ENCODE measurements at regions of chr9 and their contacts with region 1.

Region 1: DNA sequence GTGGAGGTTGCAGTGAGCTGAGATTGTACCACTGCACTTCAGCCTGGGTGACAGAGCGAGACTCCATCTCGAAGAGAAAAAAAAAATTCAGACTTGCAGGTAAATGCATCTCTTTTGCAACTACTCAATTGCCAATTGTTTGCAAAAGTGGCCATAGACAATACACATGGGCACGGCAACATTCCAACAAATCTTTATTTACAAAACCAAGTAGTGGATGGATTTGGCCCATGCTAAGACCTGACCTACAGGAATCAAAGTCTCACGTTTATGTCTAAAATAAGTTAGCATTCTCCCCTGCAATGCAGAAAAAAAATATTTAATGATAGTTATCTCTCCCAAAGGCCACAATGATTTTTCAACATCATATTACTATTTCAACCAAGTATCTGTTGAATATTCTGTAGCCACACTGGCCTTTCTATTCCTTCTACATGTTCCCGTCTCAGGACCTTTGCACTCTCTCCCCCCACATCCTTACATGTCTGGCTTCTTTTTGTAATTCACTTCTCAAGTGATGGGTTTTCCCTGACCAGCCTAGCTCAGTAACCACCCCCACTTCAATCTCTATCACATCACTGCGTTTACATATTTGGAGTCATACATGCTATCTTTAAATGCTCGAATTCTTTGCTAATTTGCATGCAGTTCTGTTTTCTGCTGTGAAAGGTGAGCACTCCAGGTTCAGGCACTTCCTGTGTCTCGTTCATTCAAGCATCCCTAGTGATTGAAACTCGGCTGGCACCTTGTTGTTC is 54.2 kb downstream of the FNBP1 start:
- DNase-seq: peak; percentile 92
- ATAC-seq: peak; percentile 74
- H3K4me3 ChIP-seq: peak overlapping the region in 1 of 5 experiments; percentile 45
- H3K4me3 Mint-ChIP-seq: peak overlapping the region; percentile 76
- H3K27ac ChIP-seq: peak overlapping the region; percentile 92
- H3K27ac Mint-ChIP-seq: peak overlapping the region; percentile 93
- H3K4me1 ChIP-seq: peaks cover 77 to 90% of the 10 kb centered on the region in 2 donors
- H3K4me1 Mint-ChIP-seq: peaks cover 71% of the 10 kb centered on the region
- H3K27me3 ChIP-seq: no peaks in the 10 kb centered on the region
- H3K27me3 Mint-ChIP-seq: no peaks in the 10 kb centered on the region
- CTCF ChIP-seq: no peak

Region 2: DNA sequence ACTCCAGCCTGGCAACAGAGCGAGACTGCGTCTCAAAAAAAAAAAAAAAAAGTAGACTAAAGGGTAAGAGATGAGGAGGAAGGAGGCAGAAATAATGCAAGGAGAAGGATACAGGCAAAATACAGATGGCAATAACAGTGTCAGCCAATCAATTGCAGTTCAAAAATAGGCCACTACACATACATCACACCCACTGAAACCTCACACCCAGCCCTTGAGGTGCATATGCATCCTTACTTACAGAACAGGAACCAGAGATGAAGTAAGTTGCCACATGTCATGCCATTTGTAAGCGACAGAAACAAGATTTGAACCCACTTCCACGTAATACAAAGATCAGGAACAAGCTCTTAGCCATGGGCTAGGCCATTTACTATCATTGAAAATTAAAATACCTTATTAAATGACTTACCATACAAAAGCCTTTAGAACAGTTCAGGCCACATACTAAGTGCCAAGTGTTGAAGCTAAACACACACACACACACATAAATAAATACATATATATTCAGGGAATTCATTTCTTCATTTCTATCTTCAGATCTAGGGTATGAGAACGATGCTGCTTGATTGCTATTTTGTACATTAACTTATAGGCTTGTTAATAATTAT is 44.2 kb before region 1 on chr9:
- CTCF ChIA-PET with region 1: no interaction called
- POLR2A ChIA-PET with region 1: interaction called, 4 read pairs
- intact Hi-C with region 1: loop called (anchors 5 kb)
- DNase-seq: peak; percentile 65
- ATAC-seq: peak; percentile 43
- H3K4me3 ChIP-seq: peak overlapping the region in 1 of 5 experiments; percentile 11
- H3K4me3 Mint-ChIP-seq: peak overlapping the region; percentile 33
- H3K27ac ChIP-seq: peak overlapping the region; percentile 25 to 84
- H3K27ac Mint-ChIP-seq: peak overlapping the region; percentile 63
- H3K4me1 ChIP-seq: peaks cover 23 to 30% of the 10 kb centered on the region in 2 donors
- H3K4me1 Mint-ChIP-seq: peaks cover 25% of the 10 kb centered on the region
- H3K27me3 ChIP-seq: no peaks in the 10 kb centered on the region
- H3K27me3 Mint-ChIP-seq: no peaks in the 10 kb centered on the region
- CTCF ChIP-seq: peak; percentile 37

Region 3: GRCh38 chr9:129962889-129963703 is 25.7 kb before region 1 on chr9:
- CTCF ChIA-PET with region 1: interaction called, 4 read pairs
- POLR2A ChIA-PET with region 1: no interaction called
- intact Hi-C with region 1: loop called (anchors 2 kb)
- DNase-seq: peak; percentile 88
- ATAC-seq: peak; percentile 96
- H3K4me3 ChIP-seq: peak overlapping the region; percentile 43 to 81 (median 58)
- H3K4me3 Mint-ChIP-seq: peak overlapping the region; percentile 83
- H3K27ac ChIP-seq: peak overlapping the region; percentile 93 to 96
- H3K27ac Mint-ChIP-seq: peak overlapping the region; percentile 93
- H3K4me1 ChIP-seq: peaks cover 30 to 35% of the 10 kb centered on the region in 2 donors
- H3K4me1 Mint-ChIP-seq: peaks cover 61% of the 10 kb centered on the region
- H3K27me3 ChIP-seq: no peaks in the 10 kb centered on the region
- H3K27me3 Mint-ChIP-seq: no peaks in the 10 kb centered on the region
- CTCF ChIP-seq: no peak

Region 4: DNA sequence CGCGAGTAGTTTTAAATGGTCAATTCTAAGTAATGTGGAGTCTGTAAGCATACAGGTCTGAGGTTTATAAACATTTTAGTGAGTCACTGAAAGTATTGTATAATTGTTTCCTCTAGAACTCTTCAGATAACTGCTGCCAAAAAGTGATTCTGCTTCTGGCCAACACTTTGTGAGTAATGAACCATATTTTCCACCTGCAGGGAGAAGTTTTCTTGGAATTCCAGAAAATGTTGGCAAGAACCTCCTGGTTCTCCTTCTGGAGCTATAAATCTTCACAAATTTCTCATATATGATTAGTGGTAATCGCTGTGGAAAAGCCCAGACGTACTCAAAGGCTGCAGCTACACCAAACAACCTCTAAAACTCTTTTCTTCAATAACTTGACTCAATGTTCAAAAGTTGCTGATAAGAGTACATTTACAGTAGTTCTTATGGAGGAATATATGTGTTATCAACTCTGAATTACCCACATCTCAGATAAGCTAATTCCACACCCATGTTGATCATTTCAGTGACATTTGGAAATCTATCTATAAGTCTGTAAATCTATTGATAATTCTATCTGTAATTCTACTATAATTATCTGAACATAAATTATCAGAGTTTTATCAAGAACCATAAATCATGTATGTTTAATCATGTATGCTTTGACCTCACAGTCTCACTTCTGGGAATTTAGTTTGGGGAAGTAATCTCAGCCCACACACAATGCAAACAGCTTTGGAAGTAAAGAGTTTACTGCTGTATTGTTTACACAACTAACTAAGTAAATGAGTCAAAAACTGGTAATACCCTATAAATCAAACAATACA is 19.9 kb before region 1 on chr9:
- CTCF ChIA-PET with region 1: interaction called, 4 read pairs
- POLR2A ChIA-PET with region 1: interaction called, 11 read pairs
- intact Hi-C with region 1: no loop called
- DNase-seq: no peak
- ATAC-seq: no peak
- H3K4me3 ChIP-seq: no peak overlapping the region
- H3K4me3 Mint-ChIP-seq: no peak overlapping the region
- H3K27ac ChIP-seq: peak overlapping the region in 1 of 2 donors; percentile 25
- H3K27ac Mint-ChIP-seq: peak overlapping the region; percentile 10
- H3K4me1 ChIP-seq: peaks cover 8 to 14% of the 10 kb centered on the region in 2 donors
- H3K4me1 Mint-ChIP-seq: peaks cover 38% of the 10 kb centered on the region
- H3K27me3 ChIP-seq: no peaks in the 10 kb centered on the region
- H3K27me3 Mint-ChIP-seq: no peaks in the 10 kb centered on the region
- CTCF ChIP-seq: no peak

Region 5: GRCh38 chr9:130002320-130003046 is 13.7 kb after region 1 on chr9:
- CTCF ChIA-PET with region 1: interaction called, 12 read pairs
- POLR2A ChIA-PET with region 1: interaction called, 6 read pairs
- intact Hi-C with region 1: loop called (anchors 1 kb)
- DNase-seq: no peak
- ATAC-seq: no peak
- H3K4me3 ChIP-seq: peak overlapping the region in 1 of 5 experiments; percentile 11
- H3K4me3 Mint-ChIP-seq: peak overlapping the region; percentile 50
- H3K27ac ChIP-seq: peak overlapping the region; percentile 15 to 96
- H3K27ac Mint-ChIP-seq: peak overlapping the region; percentile 89
- H3K4me1 ChIP-seq: peaks cover 53 to 56% of the 10 kb centered on the region in 2 donors
- H3K4me1 Mint-ChIP-seq: peaks cover 63% of the 10 kb centered on the region
- H3K27me3 ChIP-seq: no peaks in the 10 kb centered on the region
- H3K27me3 Mint-ChIP-seq: no peaks in the 10 kb centered on the region
- CTCF ChIP-seq: no peak

Region 6: GRCh38 chr9:130010151-130010988 is 21.6 kb after region 1 on chr9:
- CTCF ChIA-PET with region 1: interaction called, 4 read pairs
- POLR2A ChIA-PET with region 1: interaction called, 12 read pairs
- intact Hi-C with region 1: loop called (anchors 1 kb)
- DNase-seq: peak; percentile 91
- ATAC-seq: peak; percentile 65
- H3K4me3 ChIP-seq: no peak overlapping the region
- H3K4me3 Mint-ChIP-seq: peak overlapping the region; percentile 61
- H3K27ac ChIP-seq: peak overlapping the region; percentile 96 to 98
- H3K27ac Mint-ChIP-seq: peak overlapping the region; percentile 93
- H3K4me1 ChIP-seq: peaks cover 67 to 70% of the 10 kb centered on the region in 2 donors
- H3K4me1 Mint-ChIP-seq: peaks cover 74% of the 10 kb centered on the region
- H3K27me3 ChIP-seq: no peaks in the 10 kb centered on the region
- H3K27me3 Mint-ChIP-seq: no peaks in the 10 kb centered on the region
- CTCF ChIP-seq: no peak

Region 7: DNA sequence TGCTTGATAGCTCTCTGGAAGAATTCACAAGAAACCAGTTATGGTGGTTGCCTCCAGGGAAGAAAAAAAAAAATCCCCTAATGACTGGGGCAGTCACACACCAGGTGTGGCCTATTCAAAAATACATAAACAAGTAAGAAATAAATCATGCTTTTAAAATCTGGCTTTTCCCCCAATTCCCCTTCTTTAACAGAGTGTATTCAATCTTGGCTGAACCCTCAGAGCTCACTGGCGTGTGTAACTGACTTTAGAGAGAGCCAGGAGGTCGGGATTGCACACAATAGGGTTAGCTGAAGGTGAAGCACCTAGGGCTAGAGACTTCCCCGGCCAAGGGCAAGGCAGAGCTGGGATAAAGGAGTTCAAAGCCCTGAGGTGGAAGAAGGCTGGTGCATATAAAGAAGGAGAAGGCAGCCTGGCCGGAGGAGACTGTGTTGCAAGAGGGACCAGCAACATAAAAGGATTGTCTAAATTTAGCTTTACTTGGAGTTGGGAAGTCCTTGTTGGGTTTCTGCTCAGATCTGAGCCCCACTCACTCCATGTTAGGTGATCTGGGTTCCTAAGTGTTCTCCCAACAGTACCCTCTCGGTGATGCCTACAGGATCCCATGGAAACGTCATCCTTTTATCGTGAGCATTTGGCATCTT is 34.5 kb after region 1 on chr9:
- CTCF ChIA-PET with region 1: interaction called, 4 read pairs
- POLR2A ChIA-PET with region 1: interaction called, 16 read pairs
- intact Hi-C with region 1: loop called (anchors 5 kb)
- DNase-seq: peak; percentile 85
- ATAC-seq: peak; percentile 82
- H3K4me3 ChIP-seq: peak overlapping the region in 3 of 5 experiments; percentile 5 to 45 (median 28)
- H3K4me3 Mint-ChIP-seq: peak overlapping the region; percentile 88
- H3K27ac ChIP-seq: peak overlapping the region; percentile 87 to 95
- H3K27ac Mint-ChIP-seq: peak overlapping the region; percentile 98
- H3K4me1 ChIP-seq: peaks cover 72 to 81% of the 10 kb centered on the region in 2 donors
- H3K4me1 Mint-ChIP-seq: peaks cover 86% of the 10 kb centered on the region
- H3K27me3 ChIP-seq: no peaks in the 10 kb centered on the region
- H3K27me3 Mint-ChIP-seq: no peaks in the 10 kb centered on the region
- CTCF ChIP-seq: no peak